Activated CD4-positive, alpha-beta T cell treated with anti-CD3 and anti-CD28 coated beads for 36 hours (primary cell): ENCODE measurements at regions of chr22 and their contacts with region 1.

Region 1: GRCh38 chr22:20957316-20958101 is 9.5 kb upstream of the AIFM3 start:
- DNase-seq: no peak
- ATAC-seq: no peak
- H3K4me3 Mint-ChIP-seq: peak overlapping the region; percentile 26
- H3K27ac Mint-ChIP-seq: no peak overlapping the region
- H3K4me1 Mint-ChIP-seq: peaks cover 15% of the 10 kb centered on the region
- H3K27me3 Mint-ChIP-seq: peaks cover 16% of the 10 kb centered on the region

Region 2: GRCh38 chr22:20319745-20320658 is 637.5 kb before region 1 on chr22 and contains the start of gene DGCR6L:
- CTCF ChIA-PET with region 1: no interaction called
- POLR2A ChIA-PET with region 1: no interaction called
- intact Hi-C with region 1: no loop called
- DNase-seq: peak; percentile 99
- ATAC-seq: peak; percentile 53
- H3K4me3 Mint-ChIP-seq: peak within 1 kb of the TSS; percentile 85
- H3K27ac Mint-ChIP-seq: peak within 1 kb of the TSS; percentile 79
- H3K4me1 Mint-ChIP-seq: peaks cover 55% of the 10 kb centered on the region
- H3K27me3 Mint-ChIP-seq: no peaks in the 10 kb centered on the region
- total RNA-seq, gene DGCR6L: 22.4 to 24.8 TPM

Region 3: GRCh38 chr22:20840646-20841371 is 116.7 kb before region 1 on chr22:
- CTCF ChIA-PET with region 1: no interaction called
- POLR2A ChIA-PET with region 1: no interaction called
- intact Hi-C with region 1: no loop called
- DNase-seq: peak; percentile 51
- ATAC-seq: peak; percentile 53
- H3K4me3 Mint-ChIP-seq: no peak overlapping the region
- H3K27ac Mint-ChIP-seq: peak overlapping the region; percentile 18
- H3K4me1 Mint-ChIP-seq: peaks cover 41% of the 10 kb centered on the region
- H3K27me3 Mint-ChIP-seq: no peaks in the 10 kb centered on the region

Region 4: DNA sequence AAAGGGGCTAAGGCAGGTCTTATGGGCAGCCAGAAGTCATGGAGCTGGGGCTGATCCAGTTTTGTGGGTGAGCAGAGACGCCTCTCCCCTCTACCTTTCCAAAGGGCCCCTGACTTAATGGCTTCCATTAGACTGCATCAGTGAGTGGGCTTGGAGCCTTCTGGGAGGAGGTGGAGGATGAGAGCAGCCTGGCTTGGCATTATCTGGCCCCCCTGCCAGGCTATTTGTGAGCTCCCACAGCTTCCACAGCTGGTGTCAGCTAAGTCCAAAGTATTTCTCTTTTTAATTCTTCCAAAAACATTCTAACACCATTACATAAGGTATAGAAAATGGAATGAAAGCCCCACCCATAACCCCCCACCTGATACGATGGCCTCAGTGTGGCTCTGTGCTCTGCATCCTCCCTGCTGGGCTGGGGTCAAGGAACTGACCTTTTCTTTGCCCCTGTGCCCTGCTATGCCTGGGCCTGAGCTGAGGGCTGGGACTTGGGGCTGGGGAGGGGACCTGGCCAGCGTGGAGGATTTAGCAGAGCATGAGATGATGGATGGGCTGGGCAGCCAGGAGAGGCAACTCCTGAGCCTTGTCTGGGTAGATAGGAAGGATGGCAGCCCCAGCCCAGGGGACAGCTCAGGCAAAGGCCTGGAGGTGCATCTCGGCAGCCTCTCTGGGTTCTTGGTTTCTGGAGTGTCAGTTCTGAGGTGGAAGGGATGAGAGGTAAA is 13.6 kb after region 1 on chr22:
- CTCF ChIA-PET with region 1: interaction called, 10 read pairs
- POLR2A ChIA-PET with region 1: no interaction called
- intact Hi-C with region 1: no loop called
- DNase-seq: no peak
- ATAC-seq: no peak
- H3K4me3 Mint-ChIP-seq: no peak overlapping the region
- H3K27ac Mint-ChIP-seq: no peak overlapping the region
- H3K4me1 Mint-ChIP-seq: no peaks in the 10 kb centered on the region
- H3K27me3 Mint-ChIP-seq: no peaks in the 10 kb centered on the region